Activated CD4-positive, alpha-beta T cell treated with anti-CD3 and anti-CD28 coated beads for 36 hours (primary cell): ENCODE measurements at regions of chr4 and their contacts with region 1.

Region 1: DNA sequence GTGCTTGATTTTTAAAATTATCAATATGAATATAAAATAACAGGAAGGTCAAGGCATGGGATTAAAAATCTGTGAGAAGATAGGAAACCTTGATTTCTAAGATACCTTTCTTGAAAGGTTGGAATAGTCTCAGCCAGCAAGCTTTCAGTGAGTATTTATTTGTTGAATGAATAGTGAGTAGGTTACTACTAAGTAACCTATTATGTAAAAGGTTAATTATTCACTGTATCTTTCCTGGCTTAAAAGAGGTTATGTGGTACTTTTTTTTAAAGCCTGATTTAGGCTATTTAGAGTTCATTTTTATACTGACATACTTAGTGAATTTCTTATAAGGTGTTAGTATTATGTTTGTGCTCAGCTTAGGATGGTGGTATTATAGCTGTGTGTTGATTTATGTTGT is 123.5 kb downstream of the PTPN13 start:
- DNase-seq: no peak
- ATAC-seq: no peak
- H3K4me3 Mint-ChIP-seq: no peak overlapping the region
- H3K27ac Mint-ChIP-seq: no peak overlapping the region
- H3K4me1 Mint-ChIP-seq: peaks cover 2% of the 10 kb centered on the region
- H3K27me3 Mint-ChIP-seq: peaks cover 2% of the 10 kb centered on the region

Region 2: DNA sequence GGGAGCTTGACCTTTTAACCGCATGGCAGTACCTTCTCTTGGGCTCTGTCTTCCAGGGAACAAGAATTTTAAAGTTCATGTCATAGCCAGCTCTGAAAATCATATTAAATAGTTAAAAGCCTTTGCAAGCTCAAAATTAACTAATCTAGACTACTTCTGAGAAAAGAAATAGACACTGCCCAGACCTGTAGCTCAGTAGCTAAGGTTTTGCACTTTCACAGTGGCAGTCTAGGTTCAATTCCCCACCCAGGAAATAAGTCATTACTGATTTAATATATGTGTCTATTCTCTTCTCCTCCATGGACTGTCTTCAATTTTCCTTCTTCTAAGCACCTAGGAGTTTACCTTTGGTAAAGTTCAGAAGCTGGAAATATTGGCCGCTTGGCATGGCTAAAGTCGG is 645.9 kb after region 1 on chr4:
- CTCF ChIA-PET with region 1: no interaction called
- POLR2A ChIA-PET with region 1: interaction called, 13 read pairs
- intact Hi-C with region 1: no loop called
- DNase-seq: no peak
- ATAC-seq: no peak
- H3K4me3 Mint-ChIP-seq: no peak overlapping the region
- H3K27ac Mint-ChIP-seq: no peak overlapping the region
- H3K4me1 Mint-ChIP-seq: no peaks in the 10 kb centered on the region
- H3K27me3 Mint-ChIP-seq: no peaks in the 10 kb centered on the region